Endothelial cell of umbilical vein (primary cell): ENCODE measurements at regions of chr4 and their contacts with region 1.

Region 1: DNA sequence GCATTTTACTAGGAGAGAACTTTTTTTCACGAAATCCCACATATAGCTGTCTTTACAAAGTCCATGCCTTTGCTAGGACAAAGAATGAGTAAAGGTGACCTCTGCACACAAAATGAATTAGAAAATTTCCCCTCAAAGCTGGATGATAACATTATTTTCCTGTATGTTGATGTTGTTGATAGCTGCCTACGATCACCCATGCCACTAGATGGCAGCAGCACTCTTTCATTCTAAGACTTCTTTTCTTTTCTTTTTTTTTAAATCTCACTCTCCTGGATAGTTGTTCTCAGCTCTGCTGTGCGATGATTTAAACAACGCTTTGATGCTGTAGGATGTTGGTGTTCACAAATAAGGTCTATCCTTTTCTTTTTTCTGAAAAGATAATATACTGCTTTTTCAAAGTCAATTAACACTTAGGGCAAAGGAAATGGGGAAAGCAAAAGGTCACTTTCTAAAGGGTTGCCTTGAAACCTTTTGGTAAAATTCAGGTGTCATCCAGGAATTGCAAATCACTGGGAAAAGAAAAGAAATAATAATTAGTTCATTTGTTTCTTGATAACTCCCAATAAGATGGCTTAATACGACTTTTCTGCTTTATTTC is 266.8 kb downstream of the C4orf33 start:
- DNase-seq: peak; percentile 75
- H3K4me3 ChIP-seq: no peak overlapping the region
- H3K27ac ChIP-seq: peak overlapping the region; percentile 5
- H3K4me1 ChIP-seq: peaks cover 22% of the 10 kb centered on the region
- H3K27me3 ChIP-seq: no peaks in the 10 kb centered on the region
- CTCF ChIP-seq: peak; percentile 67 to 68
- POLR2A ChIP-seq: no peak

Region 2: DNA sequence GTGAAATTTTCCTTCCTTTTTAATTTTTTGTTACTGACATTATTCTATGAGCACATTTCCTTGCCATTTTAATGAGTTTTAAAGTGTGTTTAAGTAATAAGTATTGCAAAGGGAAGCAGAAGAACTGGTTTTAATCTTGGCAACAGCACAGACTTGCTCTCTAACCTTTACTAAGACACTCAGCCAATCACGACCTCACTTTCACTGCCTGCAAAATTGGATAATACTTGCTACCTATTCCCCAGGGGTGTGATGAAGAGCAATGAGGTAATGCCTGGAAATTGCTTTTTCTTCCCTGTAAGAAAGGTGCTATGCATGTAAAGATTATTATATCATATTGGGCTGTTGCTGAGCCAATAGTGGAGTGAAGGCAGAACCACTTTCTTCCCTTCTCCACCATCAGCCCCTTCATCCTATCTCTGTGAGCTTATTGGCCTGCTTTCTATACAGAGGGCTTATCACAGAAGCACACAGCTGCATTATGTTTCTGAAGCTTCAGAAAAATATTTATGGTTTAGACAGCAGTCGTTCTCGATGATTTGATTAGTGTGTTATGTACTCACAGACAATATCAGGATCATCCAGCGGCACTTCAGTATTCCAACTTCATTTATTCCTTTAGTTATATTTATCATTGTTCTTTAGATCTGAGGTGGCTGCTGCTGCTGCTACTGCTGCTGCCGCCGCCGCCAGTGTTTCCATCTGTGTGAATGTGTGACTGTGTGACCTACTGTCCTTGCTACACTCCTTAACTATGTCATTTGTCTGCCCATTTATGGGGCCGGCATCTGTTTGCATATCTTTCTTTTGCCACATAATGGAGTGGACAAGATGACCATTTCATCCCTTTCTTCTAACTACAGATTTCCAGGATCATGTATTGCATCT is 11.7 kb before region 1 on chr4:
- CTCF ChIA-PET with region 1: interaction called, 15 read pairs
- POLR2A ChIA-PET with region 1: no interaction called
- dilution Hi-C with region 1: no loop called
- intact Hi-C with region 1: no loop called
- DNase-seq: no peak
- H3K4me3 ChIP-seq: no peak overlapping the region
- H3K27ac ChIP-seq: no peak overlapping the region
- H3K4me1 ChIP-seq: no peaks in the 10 kb centered on the region
- H3K27me3 ChIP-seq: no peaks in the 10 kb centered on the region
- CTCF ChIP-seq: no peak
- POLR2A ChIP-seq: no peak

Region 3: DNA sequence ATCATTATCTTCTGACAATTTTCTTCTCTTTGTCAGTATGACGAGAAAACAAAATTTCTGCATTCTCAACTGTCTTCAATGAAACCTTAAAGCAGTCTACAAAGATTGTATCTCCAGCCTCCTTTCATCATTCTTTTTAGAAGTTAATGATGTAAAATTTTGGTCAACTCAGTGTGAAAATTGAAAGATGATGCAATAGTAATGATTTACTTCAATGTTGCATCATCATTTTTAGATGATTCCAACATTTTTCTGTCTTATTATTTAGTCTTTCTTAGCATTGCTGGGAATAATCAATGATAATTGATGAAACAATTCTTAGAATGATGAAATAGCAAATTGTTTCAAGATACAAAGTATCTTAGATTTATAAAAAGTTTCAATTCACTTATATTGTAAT is 105.8 kb after region 1 on chr4:
- CTCF ChIA-PET with region 1: no interaction called
- POLR2A ChIA-PET with region 1: no interaction called
- dilution Hi-C with region 1: no loop called
- intact Hi-C with region 1: no loop called
- DNase-seq: no peak
- H3K4me3 ChIP-seq: no peak overlapping the region
- H3K27ac ChIP-seq: no peak overlapping the region
- H3K4me1 ChIP-seq: no peaks in the 10 kb centered on the region
- H3K27me3 ChIP-seq: no peaks in the 10 kb centered on the region
- CTCF ChIP-seq: no peak
- POLR2A ChIP-seq: no peak

Region 4: GRCh38 chr4:129526814-129527213 is 164.0 kb after region 1 on chr4:
- CTCF ChIA-PET with region 1: interaction called, 20 read pairs
- POLR2A ChIA-PET with region 1: no interaction called
- dilution Hi-C with region 1: no loop called
- intact Hi-C with region 1: no loop called
- DNase-seq: peak; percentile 57
- H3K4me3 ChIP-seq: no peak overlapping the region
- H3K27ac ChIP-seq: no peak overlapping the region
- H3K4me1 ChIP-seq: no peaks in the 10 kb centered on the region
- H3K27me3 ChIP-seq: no peaks in the 10 kb centered on the region
- CTCF ChIP-seq: no peak
- POLR2A ChIP-seq: no peak

Region 5: GRCh38 chr4:129747756-129748155 is 385.0 kb after region 1 on chr4:
- CTCF ChIA-PET with region 1: interaction called, 3 read pairs
- POLR2A ChIA-PET with region 1: no interaction called
- dilution Hi-C with region 1: no loop called
- intact Hi-C with region 1: loop called (anchors 5 kb)
- DNase-seq: no peak
- H3K4me3 ChIP-seq: no peak overlapping the region
- H3K27ac ChIP-seq: no peak overlapping the region
- H3K4me1 ChIP-seq: no peaks in the 10 kb centered on the region
- H3K27me3 ChIP-seq: no peaks in the 10 kb centered on the region
- CTCF ChIP-seq: no peak
- POLR2A ChIP-seq: no peak

Region 6: GRCh38 chr4:129842096-129842495 is 479.3 kb after region 1 on chr4:
- CTCF ChIA-PET with region 1: no interaction called
- POLR2A ChIA-PET with region 1: no interaction called
- dilution Hi-C with region 1: no loop called
- intact Hi-C with region 1: no loop called
- DNase-seq: no peak
- H3K4me3 ChIP-seq: no peak overlapping the region
- H3K27ac ChIP-seq: no peak overlapping the region
- H3K4me1 ChIP-seq: no peaks in the 10 kb centered on the region
- H3K27me3 ChIP-seq: no peaks in the 10 kb centered on the region
- CTCF ChIP-seq: no peak
- POLR2A ChIP-seq: no peak

Region 7: GRCh38 chr4:130359542-130359941 is 996.8 kb after region 1 on chr4:
- CTCF ChIA-PET with region 1: interaction called, 18 read pairs
- POLR2A ChIA-PET with region 1: no interaction called
- dilution Hi-C with region 1: no loop called
- intact Hi-C with region 1: loop called (anchors 2 kb)
- DNase-seq: peak; percentile 48
- H3K4me3 ChIP-seq: no peak overlapping the region
- H3K27ac ChIP-seq: no peak overlapping the region
- H3K4me1 ChIP-seq: no peaks in the 10 kb centered on the region
- H3K27me3 ChIP-seq: no peaks in the 10 kb centered on the region
- CTCF ChIP-seq: peak; percentile 26
- POLR2A ChIP-seq: no peak